H1 (cell line): ENCODE measurements at regions of chr5 and their contacts with region 1.

Region 1: DNA sequence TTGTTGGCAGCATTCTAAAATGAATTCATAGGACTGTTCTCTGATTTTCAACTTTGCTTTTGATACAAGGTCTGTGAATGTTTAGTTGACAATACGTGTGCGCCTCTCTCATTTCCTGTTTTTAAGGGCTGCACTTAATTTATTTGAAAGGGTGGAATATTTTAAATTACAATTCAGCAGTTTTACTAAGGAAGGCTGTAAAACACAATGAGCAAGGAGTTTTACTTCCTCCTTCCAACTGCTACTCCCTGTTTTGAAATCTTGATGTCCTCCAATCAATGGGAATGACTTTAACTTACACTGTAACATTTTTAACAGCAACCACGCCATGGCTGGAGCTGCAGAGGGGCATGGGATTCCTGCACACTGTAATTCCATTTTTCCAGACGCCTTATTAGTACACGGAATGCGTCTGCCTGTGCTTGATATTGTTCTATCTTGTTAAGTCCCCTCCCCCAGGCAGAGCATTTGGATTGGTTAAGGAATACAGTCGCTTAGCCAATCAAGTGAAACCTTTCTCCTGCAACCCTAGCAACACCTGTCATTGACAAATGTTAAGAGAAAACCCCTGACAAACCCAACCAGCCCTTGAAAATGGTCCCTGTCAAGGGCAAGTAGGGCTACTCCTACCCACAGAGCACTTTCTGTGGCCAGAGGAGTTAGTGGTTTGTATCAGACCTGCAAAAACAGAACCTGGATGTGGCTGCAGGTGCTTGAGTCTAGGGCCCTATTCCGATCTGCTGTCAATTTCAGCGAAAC is 12.5 kb upstream of the ZSWIM6 start:
- DNase-seq: peak in 1 of 2 experiments; percentile 60
- H3K4me3 ChIP-seq: peak overlapping the region; percentile 4 to 50 (median 34); a peak in 5 of 8 replicates
- H3K27ac ChIP-seq: peak overlapping the region; percentile 47; the same call in 1 of the 2 replicates
- H3K4me1 ChIP-seq: peaks cover 0 to 6% (median 0%) of the 10 kb centered on the region in 4 experiments; a peak in 1 of 7 replicates
- H3K27me3 ChIP-seq: no peaks in the 10 kb centered on the region; a peak in 1 of 7 replicates
- CTCF ChIP-seq: no peak
- EP300 ChIP-seq: no peak
- POLR2A ChIP-seq: no peak
- RAD21 ChIP-seq: no peak

Region 2: GRCh38 chr5:61331407-61332357 is 12.1 kb after region 1 on chr5 and contains the start of gene ZSWIM6:
- CTCF ChIA-PET with region 1: interaction called, 9 read pairs
- POLR2A ChIA-PET with region 1: interaction called, 20 read pairs
- DNase-seq: peak; percentile 97
- H3K4me3 ChIP-seq: peak within 1 kb of the TSS; percentile 69 to 93 (median 79)
- H3K27ac ChIP-seq: no peak within 1 kb of the TSS; the same call in 1 of the 2 replicates
- H3K4me1 ChIP-seq: peaks cover 3 to 16% (median 10%) of the 10 kb centered on the region in 4 experiments; a peak in 6 of 7 replicates
- H3K27me3 ChIP-seq: peaks cover 18 to 68% (median 44%) of the 10 kb centered on the region in 4 experiments
- CTCF ChIP-seq: no peak
- EP300 ChIP-seq: 0 out of 3 replicates have a peak, but pooled peaks of 1 of the 2 experiments have one; percentile 12
- POLR2A ChIP-seq: peak; percentile 89 to 93
- RAD21 ChIP-seq: no peak
- total RNA-seq, gene ZSWIM6: 11.4 and 12.4 TPM in 2 replicates

Region 3: DNA sequence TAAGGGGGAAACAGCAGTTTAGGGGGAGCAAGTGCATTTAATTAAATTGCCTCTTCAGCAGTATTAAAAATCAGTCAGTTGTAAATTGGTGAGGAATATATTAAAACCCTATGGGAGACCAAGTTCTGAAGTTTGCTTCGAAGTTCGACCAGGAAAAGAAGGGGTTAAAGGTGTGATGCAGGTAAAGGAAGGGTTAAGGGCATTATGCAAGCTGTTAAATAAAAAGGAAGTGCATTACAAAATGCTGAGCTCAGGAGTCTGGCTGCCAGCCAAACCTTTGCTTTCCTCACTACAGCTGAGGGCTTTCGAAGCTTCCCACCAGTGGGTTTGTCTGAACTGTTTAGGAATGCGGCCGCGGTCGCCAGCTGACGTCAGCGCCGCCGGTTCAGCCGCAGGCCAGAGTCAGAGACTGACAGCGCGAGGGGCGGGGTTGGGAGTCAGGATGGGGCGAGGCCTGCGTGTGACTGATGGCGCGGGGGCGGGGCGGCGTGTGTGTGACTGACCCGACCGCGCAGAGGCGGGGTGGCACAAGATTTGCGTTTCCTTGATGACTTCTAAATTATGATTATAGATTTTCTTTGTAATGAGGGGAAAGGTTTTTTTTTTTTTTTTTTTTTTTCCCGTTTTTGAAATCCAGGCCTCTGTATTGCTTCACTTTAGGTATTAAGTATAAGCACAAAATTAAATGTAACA is 89.1 kb after region 1 on chr5:
- CTCF ChIA-PET with region 1: no interaction called
- POLR2A ChIA-PET with region 1: no interaction called
- DNase-seq: peak; percentile 88 to 94
- H3K4me3 ChIP-seq: peak overlapping the region; percentile 51 to 79 (median 60)
- H3K27ac ChIP-seq: no peak overlapping the region
- H3K4me1 ChIP-seq: peaks cover 2 to 16% (median 7%) of the 10 kb centered on the region in 4 experiments; a peak in 4 of 7 replicates
- H3K27me3 ChIP-seq: no peaks in the 10 kb centered on the region
- CTCF ChIP-seq: no peak
- EP300 ChIP-seq: no peak
- POLR2A ChIP-seq: no peak
- RAD21 ChIP-seq: no peak